Endothelial cell of umbilical vein (primary cell): ENCODE measurements at regions of chr2 and their contacts with region 1.

Region 1: DNA sequence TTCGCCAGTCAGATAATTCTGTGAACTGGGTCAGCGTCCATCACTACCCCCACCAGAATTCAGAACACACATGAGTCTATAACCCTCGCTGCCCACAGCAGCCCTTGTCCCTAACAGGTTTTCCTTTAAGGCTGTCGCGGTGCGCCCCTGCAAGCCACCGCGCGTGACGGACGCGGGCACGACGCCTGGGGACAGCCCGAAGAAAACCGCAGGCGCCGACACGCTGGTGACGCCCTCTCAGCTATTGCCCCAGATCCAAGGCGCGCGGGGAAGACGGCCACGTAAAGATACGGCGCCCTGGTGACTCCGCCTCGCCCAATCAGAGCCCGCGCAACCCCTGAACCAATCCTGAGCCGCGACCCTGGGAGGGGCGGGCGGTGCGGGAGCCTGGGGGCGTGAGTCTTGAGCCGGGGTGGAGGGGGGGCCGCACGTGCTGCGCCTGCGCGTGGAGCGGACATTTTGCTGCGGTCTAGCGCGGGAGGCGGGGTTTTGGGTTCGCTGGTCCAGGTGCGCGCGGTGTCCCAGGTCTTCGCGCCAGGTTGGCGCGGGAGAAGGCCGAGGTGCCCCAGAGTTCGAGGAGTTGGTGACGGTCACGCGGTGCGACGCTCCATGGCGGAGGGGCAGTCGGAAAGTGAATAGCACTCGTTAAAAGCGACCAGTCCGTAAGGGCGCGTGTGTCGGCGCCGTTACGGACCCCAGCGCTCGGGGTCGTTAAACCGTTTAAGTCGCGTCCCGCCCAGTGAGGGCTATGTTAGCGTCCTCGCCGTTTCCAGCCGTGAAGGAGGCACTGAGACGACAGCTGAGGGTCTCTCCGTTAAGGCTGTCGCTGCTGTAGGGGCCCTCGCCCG is 15.9 kb downstream of the NMUR1 start:
- DNase-seq: peak; percentile 97
- H3K4me3 ChIP-seq: peak overlapping the region; percentile 54 to 79 (median 76)
- H3K27ac ChIP-seq: peak overlapping the region; percentile 62
- H3K4me1 ChIP-seq: peaks cover 12% of the 10 kb centered on the region
- H3K27me3 ChIP-seq: peaks cover 0 to 3% of the 10 kb centered on the region in 2 experiments
- CTCF ChIP-seq: no peak
- POLR2A ChIP-seq: peak; percentile 86

Region 2: GRCh38 chr2:231411831-231412617 is 102.3 kb before region 1 on chr2:
- CTCF ChIA-PET with region 1: no interaction called
- POLR2A ChIA-PET with region 1: no interaction called
- dilution Hi-C with region 1: no loop called
- intact Hi-C with region 1: no loop called
- DNase-seq: peak; percentile 81
- H3K4me3 ChIP-seq: peak overlapping the region; percentile 18 to 73 (median 21)
- H3K27ac ChIP-seq: no peak overlapping the region
- H3K4me1 ChIP-seq: peaks cover 3% of the 10 kb centered on the region
- H3K27me3 ChIP-seq: no peaks in the 10 kb centered on the region
- CTCF ChIP-seq: peak; percentile 91 to 97
- POLR2A ChIP-seq: no peak

Region 3: DNA sequence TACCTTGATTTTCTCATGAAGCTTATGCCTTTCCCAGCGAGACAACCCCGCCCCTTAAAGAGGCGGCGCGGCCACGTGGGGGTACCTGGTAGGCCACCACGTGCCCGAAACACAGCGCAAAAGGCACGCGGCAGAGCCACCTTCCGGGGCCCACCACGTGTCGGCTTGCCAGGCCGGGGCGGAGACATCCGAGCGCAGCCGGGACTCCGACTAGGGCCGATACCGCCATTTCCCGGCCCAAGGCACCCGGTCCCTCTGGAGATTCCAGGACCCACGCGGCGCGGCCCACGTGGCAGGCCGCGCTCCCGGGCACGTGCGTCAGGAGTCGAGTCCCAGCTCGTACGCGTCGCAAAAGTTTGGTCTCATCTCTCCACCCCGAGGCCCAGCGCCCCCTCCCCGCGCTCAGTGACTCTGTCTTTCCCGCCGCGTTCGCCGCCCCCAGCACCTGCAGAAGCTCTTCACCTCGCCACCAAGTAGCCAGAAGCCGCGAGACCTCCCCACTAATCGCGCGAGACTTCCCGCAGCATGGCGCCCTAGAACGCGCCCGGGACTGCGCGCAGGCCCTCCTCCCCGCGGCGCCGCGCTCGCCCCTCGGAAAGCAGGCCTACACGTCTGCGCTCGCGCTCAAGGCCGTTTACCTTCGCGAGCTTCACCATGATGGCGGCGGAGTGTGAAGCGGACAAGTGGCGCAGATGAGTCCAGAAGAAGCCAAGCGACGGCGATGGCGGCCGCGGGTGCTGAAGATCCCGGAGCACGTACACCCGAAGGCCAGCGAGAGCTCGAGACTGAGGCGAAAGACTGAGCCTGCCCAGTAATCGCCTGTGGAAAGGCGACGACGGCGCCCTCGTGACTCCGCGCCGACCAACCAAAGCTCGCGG is 50.4 kb before region 1 on chr2 and contains the start of gene NCL:
- CTCF ChIA-PET with region 1: interaction called, 5 read pairs
- POLR2A ChIA-PET with region 1: interaction called, 16 read pairs
- dilution Hi-C with region 1: no loop called
- intact Hi-C with region 1: loop called (anchors 2 kb)
- DNase-seq: peak; percentile 99
- H3K4me3 ChIP-seq: peak within 1 kb of the TSS; percentile 93 to 99 (median 96)
- H3K27ac ChIP-seq: peak within 1 kb of the TSS; percentile 79
- H3K4me1 ChIP-seq: peaks cover 20% of the 10 kb centered on the region
- H3K27me3 ChIP-seq: no peaks in the 10 kb centered on the region
- CTCF ChIP-seq: no peak
- POLR2A ChIP-seq: peak; percentile 99
- total RNA-seq, gene NCL: 701 and 708 TPM in 2 replicates

Region 4: DNA sequence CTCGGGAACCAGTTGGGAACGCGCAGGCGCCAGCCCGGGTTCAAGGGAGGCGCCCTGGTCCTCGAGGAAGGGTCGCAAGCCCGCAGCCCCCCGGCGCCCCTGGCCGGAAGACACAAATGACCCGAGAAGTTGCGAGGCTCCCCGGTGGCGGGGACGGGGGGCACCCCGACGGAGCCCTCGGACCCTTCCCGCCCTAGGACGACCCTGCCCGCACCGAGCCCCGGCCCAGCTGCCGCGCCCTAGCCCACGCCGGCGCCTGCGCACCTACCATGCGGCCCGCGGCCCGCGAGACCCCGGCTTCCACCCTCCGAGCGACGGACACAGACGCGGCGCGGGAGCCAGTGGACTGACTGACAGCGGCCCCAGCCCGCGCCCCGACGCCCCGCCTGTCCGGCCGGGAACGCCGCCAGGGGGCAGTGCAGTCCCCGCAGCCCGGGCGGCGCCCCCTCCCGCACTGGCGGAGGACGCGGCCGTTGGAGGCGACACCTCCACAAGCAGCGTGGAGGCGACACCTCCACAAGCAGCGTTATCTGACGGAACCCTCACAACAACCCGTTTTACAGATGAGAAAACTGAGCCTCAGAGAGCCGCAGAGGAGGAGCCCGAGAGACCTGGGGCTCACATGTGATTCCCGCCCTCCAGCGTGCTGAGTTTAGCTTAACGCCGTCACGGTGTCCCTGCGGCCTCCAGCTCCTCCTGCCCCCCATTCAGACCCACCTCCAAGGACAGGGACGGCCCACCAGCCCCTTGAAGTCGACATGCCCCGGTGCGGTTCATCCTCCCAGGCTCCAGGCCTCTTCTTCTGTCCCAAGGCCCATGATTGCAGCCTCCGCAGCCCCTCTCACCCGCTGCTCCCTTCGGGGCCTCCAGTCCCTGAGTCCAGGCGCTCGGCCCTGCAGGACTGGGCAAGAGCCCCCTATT is 16.0 kb after region 1 on chr2 and contains the start of gene NMUR1:
- CTCF ChIA-PET with region 1: interaction called, 11 read pairs
- POLR2A ChIA-PET with region 1: no interaction called
- dilution Hi-C with region 1: no loop called
- intact Hi-C with region 1: no loop called
- DNase-seq: peak; percentile 39
- H3K4me3 ChIP-seq: no peak within 1 kb of the TSS
- H3K27ac ChIP-seq: no peak within 1 kb of the TSS
- H3K4me1 ChIP-seq: peaks cover 3% of the 10 kb centered on the region
- H3K27me3 ChIP-seq: peaks cover 9 to 13% of the 10 kb centered on the region in 2 experiments
- CTCF ChIP-seq: peak; percentile 72 to 91
- POLR2A ChIP-seq: no peak
- total RNA-seq, gene NMUR1: not detected in 2 replicates

Region 5: DNA sequence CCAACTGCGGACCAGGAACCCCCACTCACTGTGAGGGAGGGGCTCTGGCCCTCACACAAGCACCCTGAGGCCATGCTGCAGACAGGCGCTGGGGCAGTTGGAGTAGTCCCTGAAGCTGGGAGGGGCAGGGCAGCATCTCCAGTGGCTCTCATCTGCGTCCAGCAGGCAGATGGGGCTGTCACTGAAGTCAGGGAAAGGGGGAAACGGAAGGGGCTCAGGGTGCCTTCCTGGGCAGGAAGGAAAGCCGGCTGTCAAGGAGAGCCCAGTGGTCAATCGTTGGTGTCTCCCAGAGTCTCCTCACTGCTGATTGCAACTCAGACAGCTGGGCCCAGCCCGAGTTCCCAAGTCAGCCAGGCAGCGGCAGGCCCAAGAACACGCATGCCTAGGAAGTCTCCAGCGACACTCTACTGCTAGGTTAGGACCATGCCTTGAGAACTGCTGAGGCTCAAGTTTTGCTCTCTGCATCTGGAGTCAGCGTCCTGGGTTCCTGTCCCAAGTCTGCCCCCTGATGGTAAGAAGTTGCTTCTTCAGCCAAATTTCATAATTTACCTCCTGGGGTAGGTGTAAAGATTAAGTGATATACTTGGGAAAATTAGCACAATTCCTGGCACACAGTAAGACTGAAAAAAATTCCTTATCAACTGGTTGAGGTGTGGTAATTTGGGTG is 43.4 kb after region 1 on chr2:
- CTCF ChIA-PET with region 1: interaction called, 40 read pairs
- POLR2A ChIA-PET with region 1: no interaction called
- dilution Hi-C with region 1: no loop called
- intact Hi-C with region 1: loop called (anchors 1 kb)
- DNase-seq: peak; percentile 74
- H3K4me3 ChIP-seq: no peak overlapping the region
- H3K27ac ChIP-seq: no peak overlapping the region
- H3K4me1 ChIP-seq: peaks cover 5% of the 10 kb centered on the region
- H3K27me3 ChIP-seq: no peaks in the 10 kb centered on the region
- CTCF ChIP-seq: peak; percentile 64 to 72
- POLR2A ChIP-seq: no peak

Region 6: GRCh38 chr2:231706731-231707624 is 192.7 kb after region 1 on chr2:
- CTCF ChIA-PET with region 1: no interaction called
- POLR2A ChIA-PET with region 1: no interaction called
- dilution Hi-C with region 1: no loop called
- intact Hi-C with region 1: loop called (anchors 5 kb)
- DNase-seq: peak; percentile 98
- H3K4me3 ChIP-seq: peak overlapping the region; percentile 23 to 64 (median 52)
- H3K27ac ChIP-seq: peak overlapping the region; percentile 89
- H3K4me1 ChIP-seq: peaks cover 12% of the 10 kb centered on the region
- H3K27me3 ChIP-seq: no peaks in the 10 kb centered on the region
- CTCF ChIP-seq: peak; percentile 97 to 98
- POLR2A ChIP-seq: peak; percentile 50